ENCODE measurements at regions of chr12 and their contacts with region 1.

Region 1: DNA sequence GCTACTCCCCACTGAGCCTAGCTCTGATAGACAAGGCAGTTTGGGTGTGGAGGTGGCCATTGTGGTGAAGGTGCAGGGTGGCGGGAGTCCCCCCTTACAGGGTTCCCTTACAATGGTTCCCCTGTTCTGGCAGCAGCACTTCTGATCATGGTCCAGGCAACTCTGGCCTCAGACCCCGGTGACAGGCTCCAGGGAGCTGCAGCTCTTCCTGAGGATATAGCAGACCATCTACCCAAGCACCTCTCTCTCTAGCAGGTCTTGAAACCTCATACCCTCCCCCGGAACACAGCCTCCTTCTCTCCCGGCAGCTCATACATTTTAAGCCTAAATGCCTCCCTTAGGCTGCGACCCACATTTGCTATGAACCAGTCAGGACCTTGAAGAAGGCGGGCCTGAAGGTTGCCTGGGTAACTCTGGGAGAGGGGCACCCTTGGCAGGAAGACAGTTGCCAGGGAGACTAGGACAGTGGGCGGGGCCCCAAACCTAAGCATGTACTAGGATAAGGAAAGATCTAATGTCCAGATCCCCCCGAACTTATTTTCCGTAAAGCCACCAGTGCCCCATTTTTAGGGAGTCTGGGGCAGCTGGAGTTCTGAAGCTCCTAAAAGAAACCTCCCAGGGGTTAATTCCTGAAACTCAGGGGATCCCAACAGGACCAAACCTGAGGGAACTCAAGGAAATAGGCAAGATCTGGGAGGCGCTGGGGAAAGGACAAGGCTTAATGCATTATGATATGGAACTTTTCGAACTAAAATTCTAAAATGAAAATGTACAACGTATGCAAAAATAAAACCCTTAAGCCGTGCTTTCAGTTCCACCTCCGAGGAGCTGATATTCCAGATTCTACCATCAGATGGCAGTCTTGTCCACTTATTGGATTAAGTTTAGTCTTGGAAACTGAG is 4.5 kb upstream of the GDF11 start:
- DNase-seq: peak; percentile 72
- ATAC-seq: peak; percentile 57
- H3K4me3 ChIP-seq: peak overlapping the region; percentile 50 to 66 (median 63)
- H3K27ac ChIP-seq: peak overlapping the region; percentile 34
- H3K4me1 ChIP-seq: peaks cover 36% of the 10 kb centered on the region
- H3K27me3 ChIP-seq: peaks cover 0 to 6% of the 10 kb centered on the region in 2 experiments; a peak in 2 of 5 replicates
- CTCF ChIP-seq: peak; percentile 85
- EP300 ChIP-seq: peak in 1 of 2 experiments; percentile 88; a peak in 1 of 4 replicates
- POLR2A ChIP-seq: no peak
- RAD21 ChIP-seq: peak; percentile 71; the same call in 1 of the 2 replicates

Region 2: GRCh38 chr12:55715833-55716581 is 22.4 kb before region 1 on chr12 and contains the start of gene BLOC1S1:
- CTCF ChIA-PET with region 1: interaction called, 6 read pairs
- POLR2A ChIA-PET with region 1: interaction called, 16 read pairs
- in situ Hi-C with region 1: no loop called
- intact Hi-C with region 1: loop called (anchors 2 kb)
- DNase-seq: peak; percentile 86
- ATAC-seq: peak; percentile 82
- H3K4me3 ChIP-seq: peak within 1 kb of the TSS; percentile 77 to 96 (median 84)
- H3K27ac ChIP-seq: peak within 1 kb of the TSS; percentile 81
- H3K4me1 ChIP-seq: peaks cover 54% of the 10 kb centered on the region
- H3K27me3 ChIP-seq: peaks cover 0 to 11% of the 10 kb centered on the region in 2 experiments; a peak in 2 of 5 replicates
- CTCF ChIP-seq: no peak
- EP300 ChIP-seq: peak in 1 of 2 experiments; percentile 36; a peak in 1 of 4 replicates
- POLR2A ChIP-seq: peak; percentile 55 to 60
- RAD21 ChIP-seq: no peak
- total RNA-seq, gene BLOC1S1: 95.3 and 99.7 TPM in 2 replicates

Region 3: DNA sequence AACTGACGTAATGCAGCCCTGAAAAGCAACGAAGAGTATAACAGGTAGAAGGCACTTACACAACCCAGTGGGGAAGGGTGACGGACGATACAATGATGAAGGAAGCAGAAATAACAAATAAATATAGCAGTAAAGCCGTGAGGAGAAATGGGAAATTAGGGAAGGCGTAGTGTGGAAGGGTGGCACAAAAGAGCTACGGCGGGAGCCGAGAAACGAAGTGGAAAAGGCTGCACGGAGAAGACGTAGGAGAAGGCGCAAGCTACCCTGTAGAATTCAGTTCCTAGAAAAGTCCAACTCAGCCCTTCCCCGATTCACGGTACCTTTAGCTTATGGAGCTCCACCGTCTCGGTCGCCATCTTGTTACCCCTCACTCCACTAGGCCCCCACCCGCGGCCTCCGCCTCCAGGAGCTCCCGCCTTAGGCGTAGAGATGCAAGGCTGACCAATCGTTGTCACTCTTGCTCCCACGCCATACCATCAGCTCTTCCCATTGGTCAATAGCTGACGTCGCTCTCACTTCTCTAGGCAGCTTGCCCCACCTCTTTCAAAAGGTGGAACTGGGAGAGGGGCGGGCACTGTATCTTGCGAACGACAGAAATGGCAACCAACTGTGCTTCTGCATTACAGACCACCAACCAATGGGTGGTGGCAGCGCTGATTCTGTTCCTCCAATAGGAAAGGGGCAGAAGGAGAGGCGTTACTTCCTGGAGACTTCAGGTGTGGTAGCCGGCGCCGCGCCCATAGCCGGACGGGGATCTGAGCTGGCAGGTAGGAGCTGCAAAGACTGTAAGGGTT is 79.2 kb after region 1 on chr12 and contains the starts of genes ORMDL2 and SARNP:
- CTCF ChIA-PET with region 1: interaction called, 3 read pairs
- POLR2A ChIA-PET with region 1: interaction called, 15 read pairs
- in situ Hi-C with region 1: no loop called
- intact Hi-C with region 1: no loop called
- DNase-seq: peak; percentile 100
- ATAC-seq: peak; percentile 97
- H3K4me3 ChIP-seq: peak within 1 kb of the TSS; percentile 81 to 93 (median 82)
- H3K27ac ChIP-seq: peak within 1 kb of the TSS; percentile 79
- H3K4me1 ChIP-seq: peaks cover 56% of the 10 kb centered on the region
- H3K27me3 ChIP-seq: no peaks in the 10 kb centered on the region; a peak in 1 of 5 replicates
- CTCF ChIP-seq: no peak
- EP300 ChIP-seq: 0 out of 4 replicates have a peak, but pooled peaks of 1 of the 2 experiments have one; percentile 6
- POLR2A ChIP-seq: peak; percentile 70 to 88
- RAD21 ChIP-seq: no peak
- total RNA-seq, gene ORMDL2: 14.8 and 28.6 TPM in 2 replicates
- total RNA-seq, gene SARNP: 95.4 and 137 TPM in 2 replicates

Region 4: GRCh38 chr12:55915482-55915859 is 177.1 kb after region 1 on chr12:
- CTCF ChIA-PET with region 1: no interaction called
- POLR2A ChIA-PET with region 1: no interaction called
- in situ Hi-C with region 1: no loop called
- intact Hi-C with region 1: no loop called
- DNase-seq: no peak
- ATAC-seq: no peak
- H3K4me3 ChIP-seq: no peak overlapping the region
- H3K27ac ChIP-seq: no peak overlapping the region
- H3K4me1 ChIP-seq: peaks cover 38% of the 10 kb centered on the region
- H3K27me3 ChIP-seq: no peaks in the 10 kb centered on the region
- CTCF ChIP-seq: no peak
- EP300 ChIP-seq: no peak
- POLR2A ChIP-seq: no peak
- RAD21 ChIP-seq: no peak

Region 5: DNA sequence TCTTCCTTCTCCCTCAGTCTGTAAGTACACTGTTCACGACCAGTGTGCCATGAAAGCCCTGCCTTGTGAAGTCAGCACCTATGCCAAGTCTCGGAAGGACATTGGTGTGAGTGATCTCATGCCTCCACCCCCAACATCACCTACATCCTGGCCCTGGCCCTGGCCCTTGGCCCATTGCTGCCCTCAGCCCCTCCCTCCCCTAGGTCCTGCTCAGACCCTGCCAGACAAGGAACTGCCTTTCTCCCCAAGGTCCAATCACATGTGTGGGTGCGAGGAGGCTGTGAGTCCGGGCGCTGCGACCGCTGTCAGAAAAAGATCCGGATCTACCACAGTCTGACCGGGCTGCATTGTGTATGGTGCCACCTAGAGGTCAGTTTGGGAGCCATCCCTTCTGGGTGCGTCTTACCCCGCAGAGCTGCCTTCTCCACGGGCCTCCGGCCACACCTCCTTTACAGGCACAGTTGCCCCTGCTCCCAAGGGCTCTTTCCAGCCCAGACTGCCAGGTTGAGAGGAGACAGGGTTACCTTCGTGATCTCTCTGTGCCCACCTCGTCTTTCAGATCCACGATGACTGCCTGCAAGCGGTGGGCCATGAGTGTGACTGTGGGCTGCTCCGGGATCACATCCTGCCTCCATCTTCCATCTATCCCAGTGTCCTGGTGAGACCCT is 201.8 kb after region 1 on chr12:
- CTCF ChIA-PET with region 1: interaction called, 15 read pairs
- POLR2A ChIA-PET with region 1: no interaction called
- in situ Hi-C with region 1: loop called (anchors 5 kb)
- intact Hi-C with region 1: no loop called
- DNase-seq: peak; percentile 69
- ATAC-seq: peak; percentile 97
- H3K4me3 ChIP-seq: peak overlapping the region in 1 of 3 experiments; percentile 45; a peak in 2 of 6 replicates
- H3K27ac ChIP-seq: no peak overlapping the region
- H3K4me1 ChIP-seq: peaks cover 11% of the 10 kb centered on the region
- H3K27me3 ChIP-seq: no peaks in the 10 kb centered on the region
- CTCF ChIP-seq: peak; percentile 98
- EP300 ChIP-seq: no peak
- POLR2A ChIP-seq: no peak
- RAD21 ChIP-seq: peak; percentile 86

Region 6: DNA sequence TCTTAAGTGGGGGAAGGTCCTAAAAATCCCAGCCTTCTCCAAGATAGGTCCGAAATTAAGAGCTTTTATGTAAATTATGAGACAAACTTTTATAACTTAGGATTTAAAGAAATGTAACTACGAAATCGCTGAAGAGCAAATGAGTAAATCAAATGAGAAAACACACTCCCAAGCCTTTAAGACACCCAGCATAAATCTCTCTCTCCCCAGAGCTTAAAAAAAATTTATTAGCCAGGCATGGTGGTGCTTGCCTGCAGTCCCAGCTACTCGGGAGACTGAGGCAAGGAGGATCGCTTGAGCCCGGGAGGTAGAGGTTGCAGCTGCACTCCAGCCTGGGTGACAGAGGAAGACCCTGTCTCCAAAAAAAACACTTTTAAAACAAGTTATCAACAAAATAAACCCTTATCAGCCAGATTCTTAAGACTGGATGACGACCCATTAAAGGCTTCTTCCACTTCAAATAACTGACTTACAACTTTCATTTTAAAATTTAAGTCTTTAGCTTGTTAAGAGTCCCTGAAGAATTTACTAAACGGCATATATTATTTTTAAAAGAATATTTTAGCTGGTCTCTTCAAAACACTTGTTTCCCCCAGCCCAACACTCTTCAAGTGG is 946.5 kb after region 1 on chr12:
- CTCF ChIA-PET with region 1: no interaction called
- POLR2A ChIA-PET with region 1: no interaction called
- in situ Hi-C with region 1: no loop called
- intact Hi-C with region 1: no loop called
- DNase-seq: no peak
- ATAC-seq: no peak
- H3K4me3 ChIP-seq: peak overlapping the region; percentile 66 to 98 (median 96)
- H3K27ac ChIP-seq: peak overlapping the region; percentile 99
- H3K4me1 ChIP-seq: peaks cover 48% of the 10 kb centered on the region
- H3K27me3 ChIP-seq: no peaks in the 10 kb centered on the region; a peak in 1 of 5 replicates
- CTCF ChIP-seq: no peak
- EP300 ChIP-seq: no peak
- POLR2A ChIP-seq: no peak
- RAD21 ChIP-seq: no peak

Measured in HepG2 (cell line).